ENCODE measurements at regions of chr17 and their contacts with region 1.

Region 1: DNA sequence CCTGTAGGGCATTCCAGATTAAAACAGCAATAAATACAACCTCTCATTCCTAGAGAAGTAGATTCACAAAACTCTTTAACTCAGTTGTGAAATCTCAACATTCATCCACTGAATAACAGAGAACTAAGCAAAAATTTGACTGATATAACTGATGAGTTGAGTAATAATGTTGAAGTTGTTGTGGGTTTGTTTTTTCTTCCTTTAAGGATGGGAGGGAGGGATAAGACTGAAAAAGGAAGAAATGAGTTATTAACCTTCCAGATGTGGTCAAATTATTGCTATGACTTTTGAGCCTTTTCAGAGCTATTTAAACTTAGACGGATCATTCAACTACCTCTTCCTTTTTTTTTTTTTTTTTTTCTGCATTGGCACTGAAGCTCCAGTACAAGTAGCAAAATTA is 38.6 kb downstream of the SKAP1 start:
- DNase-seq: no peak
- ATAC-seq: no peak
- H3K4me3 ChIP-seq: no peak overlapping the region
- H3K4me3 Mint-ChIP-seq: no peak overlapping the region
- H3K27ac ChIP-seq: no peak overlapping the region
- H3K27ac Mint-ChIP-seq: peak overlapping the region in 1 of 2 donors; percentile 10
- H3K4me1 ChIP-seq: peaks cover 2 to 4% of the 10 kb centered on the region in 2 experiments
- H3K4me1 Mint-ChIP-seq: peaks cover 60 to 71% (median 66%) of the 10 kb centered on the region in 3 donors
- H3K27me3 ChIP-seq: no peaks in the 10 kb centered on the region
- H3K27me3 Mint-ChIP-seq: no peaks in the 10 kb centered on the region

Region 2: DNA sequence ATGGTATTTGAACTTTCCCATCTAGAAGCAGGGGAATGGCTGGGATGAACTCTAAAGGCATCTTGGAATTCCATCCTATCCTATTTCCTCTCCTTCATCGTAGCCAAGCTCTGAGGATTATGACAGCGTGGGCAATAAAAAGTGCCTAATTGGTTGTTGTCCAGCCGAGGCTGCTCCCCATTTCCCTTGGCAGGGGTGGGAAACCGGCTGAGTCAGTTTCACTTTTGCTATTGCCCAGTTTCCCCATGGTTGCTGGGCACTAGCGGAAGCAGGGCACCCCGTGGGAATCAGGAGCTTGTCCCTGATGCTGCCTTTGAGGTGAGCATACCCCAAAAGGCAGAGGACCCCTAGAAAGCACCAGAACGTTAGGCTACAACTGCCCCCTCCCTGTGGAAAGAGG is 509.2 kb before region 1 on chr17:
- CTCF ChIA-PET with region 1: no interaction called
- POLR2A ChIA-PET with region 1: interaction called in 1 of 2 experiments, 11 read pairs
- DNase-seq: no peak
- ATAC-seq: no peak
- H3K4me3 ChIP-seq: no peak overlapping the region
- H3K4me3 Mint-ChIP-seq: no peak overlapping the region
- H3K27ac ChIP-seq: no peak overlapping the region
- H3K27ac Mint-ChIP-seq: no peak overlapping the region
- H3K4me1 ChIP-seq: peaks cover 16 to 39% of the 10 kb centered on the region in 2 experiments
- H3K4me1 Mint-ChIP-seq: peaks cover 33 to 41% (median 40%) of the 10 kb centered on the region in 3 donors
- H3K27me3 ChIP-seq: peaks cover 0 to 49% of the 10 kb centered on the region in 2 experiments
- H3K27me3 Mint-ChIP-seq: peaks cover 0 to 11% of the 10 kb centered on the region in 2 donors

Region 3: GRCh38 chr17:48283411-48283810 is 108.0 kb before region 1 on chr17:
- CTCF ChIA-PET with region 1: no interaction called
- POLR2A ChIA-PET with region 1: no interaction called
- DNase-seq: no peak
- ATAC-seq: no peak
- H3K4me3 ChIP-seq: no peak overlapping the region
- H3K4me3 Mint-ChIP-seq: no peak overlapping the region
- H3K27ac ChIP-seq: no peak overlapping the region
- H3K27ac Mint-ChIP-seq: no peak overlapping the region
- H3K4me1 ChIP-seq: no peaks in the 10 kb centered on the region
- H3K4me1 Mint-ChIP-seq: peaks cover 20 to 31% (median 22%) of the 10 kb centered on the region in 3 donors
- H3K27me3 ChIP-seq: no peaks in the 10 kb centered on the region
- H3K27me3 Mint-ChIP-seq: no peaks in the 10 kb centered on the region

Region 4: GRCh38 chr17:48374650-48375230 is 16.7 kb before region 1 on chr17:
- CTCF ChIA-PET with region 1: interaction called in 1 of 2 experiments, 14 read pairs
- POLR2A ChIA-PET with region 1: no interaction called
- DNase-seq: peak in 25 of 35 experiments; percentile 1 to 57 (median 15)
- ATAC-seq: peak in 1 of 4 experiments; percentile 57
- H3K4me3 ChIP-seq: no peak overlapping the region
- H3K4me3 Mint-ChIP-seq: no peak overlapping the region
- H3K27ac ChIP-seq: no peak overlapping the region
- H3K27ac Mint-ChIP-seq: no peak overlapping the region
- H3K4me1 ChIP-seq: peaks cover 0 to 26% of the 10 kb centered on the region in 2 experiments
- H3K4me1 Mint-ChIP-seq: peaks cover 37 to 40% (median 38%) of the 10 kb centered on the region in 3 donors
- H3K27me3 ChIP-seq: no peaks in the 10 kb centered on the region
- H3K27me3 Mint-ChIP-seq: no peaks in the 10 kb centered on the region